Cardiac septum (tissue), 1 donor: ENCODE measurements at regions of chr4 and their contacts with region 1.

Region 1: DNA sequence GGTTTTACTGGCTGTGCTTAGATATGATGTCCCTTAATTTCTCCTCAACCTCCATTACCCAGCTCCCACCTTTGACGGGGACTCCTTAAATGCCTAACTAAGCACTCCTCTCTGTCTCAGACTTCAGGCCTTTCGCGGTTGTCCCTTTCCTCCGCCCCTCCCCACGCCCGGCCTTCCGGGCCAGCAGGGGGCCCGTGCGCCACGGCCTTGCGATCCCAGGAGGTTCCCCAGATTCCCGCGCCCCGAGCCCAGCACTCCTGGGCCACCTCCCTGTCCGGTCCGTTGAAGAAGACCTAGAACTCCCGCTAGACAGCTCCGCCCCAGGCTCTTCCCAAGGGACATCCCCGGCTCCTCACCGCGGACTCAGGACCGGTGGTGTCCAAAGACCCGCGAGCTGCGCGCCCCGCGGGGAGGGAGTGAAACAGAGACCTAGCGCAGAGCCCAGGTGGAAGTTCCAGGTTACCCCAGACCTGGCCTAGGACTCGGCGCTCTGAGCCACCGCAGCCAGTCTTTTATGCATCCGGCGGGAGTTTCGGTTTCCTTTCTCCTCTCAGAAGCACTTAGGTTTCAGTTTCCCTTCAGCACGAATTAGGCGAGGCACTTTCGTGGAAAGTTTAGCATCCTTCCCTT is at the start of gene DDX60:
- DNase-seq: peak; percentile 92
- total RNA-seq, gene DDX60: 10.8 TPM

Region 2: DNA sequence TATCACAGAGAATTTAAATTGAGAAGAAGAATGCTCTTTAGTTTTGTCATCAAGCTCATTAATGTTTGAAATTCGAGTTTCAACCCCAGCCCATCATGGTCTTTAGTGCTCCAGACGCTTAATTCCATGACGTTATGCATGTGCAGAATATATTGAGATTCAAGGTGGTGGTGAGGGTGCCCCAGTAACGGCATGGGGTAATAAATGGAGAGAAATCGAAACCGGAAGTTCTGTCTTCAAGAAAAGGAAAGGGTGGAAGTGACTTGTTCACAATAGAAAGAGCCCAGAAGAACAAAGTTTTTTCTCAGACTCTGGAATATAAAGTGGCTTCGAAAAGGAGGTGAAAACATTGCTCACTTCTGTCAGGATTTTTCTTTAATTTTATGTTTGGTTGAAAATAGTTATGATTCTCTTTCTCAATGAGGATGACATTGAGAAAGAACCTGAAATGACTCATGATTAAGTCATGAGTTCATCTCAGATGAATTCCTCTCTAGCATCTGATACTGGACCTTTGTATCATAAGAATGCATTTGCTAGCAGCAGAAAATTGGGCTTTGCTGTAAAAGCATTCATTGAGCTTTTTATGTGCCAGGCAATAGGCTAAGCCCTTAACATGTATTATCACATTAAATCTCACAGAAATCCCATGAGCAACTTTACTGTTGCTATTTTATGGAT is 162.7 kb after region 1 on chr4:
- intact Hi-C with region 1: loop called (anchors 5 kb)
- DNase-seq: no peak